Activated CD4-positive, alpha-beta T cell treated with anti-CD3 and anti-CD28 coated beads, Interleukin-2, amount 10 ng/mL, durations not matched to agents 24 days and 14 days (primary cell): ENCODE measurements at regions of chr1 and their contacts with region 1.

Region 1: GRCh38 chr1:158969855-158970254 is 38.5 kb downstream of the PYHIN1 start:
- DNase-seq: no peak
- H3K4me3 Mint-ChIP-seq: no peak overlapping the region
- H3K27ac Mint-ChIP-seq: peak overlapping the region; percentile 84
- H3K4me1 Mint-ChIP-seq: peaks cover 15% of the 10 kb centered on the region
- H3K27me3 Mint-ChIP-seq: no peaks in the 10 kb centered on the region

Region 2: DNA sequence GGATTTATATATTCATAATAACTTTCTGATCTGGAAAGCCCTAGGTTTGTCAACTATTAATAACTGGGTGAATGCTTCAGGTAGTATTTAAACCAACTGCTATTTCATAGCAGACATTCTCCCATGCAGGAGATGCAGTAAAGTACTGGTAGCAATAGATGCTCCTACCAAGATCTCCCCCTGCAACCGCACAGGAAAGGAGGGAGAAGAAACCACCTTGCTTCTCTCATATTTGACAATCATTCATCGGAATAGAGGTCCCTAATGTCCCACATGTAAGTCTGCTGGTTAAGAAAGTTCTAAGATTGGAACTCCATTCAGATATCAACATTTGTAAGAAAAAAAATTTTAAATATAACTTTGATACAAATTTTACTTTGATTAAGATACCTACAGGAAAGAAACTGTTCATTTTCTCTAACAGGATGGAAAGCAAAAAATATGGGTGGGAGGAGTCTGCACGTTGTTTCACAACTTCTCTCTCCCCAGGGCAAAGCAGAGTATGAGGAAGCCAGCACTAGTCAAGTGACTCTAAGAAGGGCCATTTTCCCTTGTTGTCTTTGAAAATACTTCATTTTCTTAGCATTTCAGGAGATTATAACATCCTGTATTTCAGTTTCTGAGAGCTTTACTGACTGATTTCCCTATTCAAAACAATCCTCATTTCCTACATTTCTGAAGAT is 38.7 kb before region 1 on chr1 and contains the start of gene PYHIN1:
- intact Hi-C with region 1: loop called (anchors 1 kb)
- DNase-seq: peak; percentile 80
- H3K4me3 Mint-ChIP-seq: peak within 1 kb of the TSS; percentile 82
- H3K27ac Mint-ChIP-seq: peak within 1 kb of the TSS; percentile 83
- H3K4me1 Mint-ChIP-seq: peaks cover 25% of the 10 kb centered on the region
- H3K27me3 Mint-ChIP-seq: peaks cover under 1% of the 10 kb centered on the region
- total RNA-seq, gene PYHIN1: 10.4 and 11.3 TPM in 2 replicates

Region 3: DNA sequence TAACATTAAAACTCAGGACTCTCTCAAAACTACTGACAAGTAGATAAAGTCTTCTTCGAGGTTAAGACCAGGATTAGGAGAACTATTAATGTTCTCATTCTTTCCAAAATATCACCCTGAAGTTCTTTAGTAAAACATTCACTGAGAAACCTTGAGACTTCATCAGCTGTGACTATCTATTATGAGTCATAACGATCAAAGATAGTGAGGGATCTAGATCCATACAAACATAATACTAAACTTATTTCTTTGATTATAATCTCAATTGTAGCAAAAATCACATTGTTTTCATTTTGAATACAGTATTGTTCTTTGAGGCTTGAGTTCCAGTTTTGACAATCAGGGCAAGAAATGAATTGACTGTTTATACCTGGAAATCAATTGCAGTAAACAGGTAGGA is 27.4 kb before region 1 on chr1:
- intact Hi-C with region 1: loop called (anchors 1 kb)
- DNase-seq: no peak
- H3K4me3 Mint-ChIP-seq: no peak overlapping the region
- H3K27ac Mint-ChIP-seq: no peak overlapping the region
- H3K4me1 Mint-ChIP-seq: peaks cover 6% of the 10 kb centered on the region
- H3K27me3 Mint-ChIP-seq: peaks cover 2% of the 10 kb centered on the region

Region 4: GRCh38 chr1:159056069-159056698 is 86.3 kb after region 1 on chr1:
- intact Hi-C with region 1: no loop called
- DNase-seq: no peak
- H3K4me3 Mint-ChIP-seq: no peak overlapping the region
- H3K27ac Mint-ChIP-seq: peak overlapping the region; percentile 66
- H3K4me1 Mint-ChIP-seq: peaks cover 35% of the 10 kb centered on the region
- H3K27me3 Mint-ChIP-seq: no peaks in the 10 kb centered on the region